ENCODE measurements at regions of chr17 and their contacts with region 1.

Region 1: GRCh38 chr17:60077672-60078519 is 825 bp downstream of the HEATR6 start:
- DNase-seq: no peak
- ATAC-seq: peak; percentile 8 to 25
- H3K4me3 ChIP-seq: peak overlapping the region; percentile 81 to 99 (median 84)
- H3K27ac ChIP-seq: peak overlapping the region; percentile 78 to 90 (median 86)
- H3K4me1 ChIP-seq: peaks cover 12 to 23% of the 10 kb centered on the region in 2 donors
- H3K27me3 ChIP-seq: no peaks in the 10 kb centered on the region
- CTCF ChIP-seq: no peak
- POLR2A ChIP-seq: no peak

Region 2: DNA sequence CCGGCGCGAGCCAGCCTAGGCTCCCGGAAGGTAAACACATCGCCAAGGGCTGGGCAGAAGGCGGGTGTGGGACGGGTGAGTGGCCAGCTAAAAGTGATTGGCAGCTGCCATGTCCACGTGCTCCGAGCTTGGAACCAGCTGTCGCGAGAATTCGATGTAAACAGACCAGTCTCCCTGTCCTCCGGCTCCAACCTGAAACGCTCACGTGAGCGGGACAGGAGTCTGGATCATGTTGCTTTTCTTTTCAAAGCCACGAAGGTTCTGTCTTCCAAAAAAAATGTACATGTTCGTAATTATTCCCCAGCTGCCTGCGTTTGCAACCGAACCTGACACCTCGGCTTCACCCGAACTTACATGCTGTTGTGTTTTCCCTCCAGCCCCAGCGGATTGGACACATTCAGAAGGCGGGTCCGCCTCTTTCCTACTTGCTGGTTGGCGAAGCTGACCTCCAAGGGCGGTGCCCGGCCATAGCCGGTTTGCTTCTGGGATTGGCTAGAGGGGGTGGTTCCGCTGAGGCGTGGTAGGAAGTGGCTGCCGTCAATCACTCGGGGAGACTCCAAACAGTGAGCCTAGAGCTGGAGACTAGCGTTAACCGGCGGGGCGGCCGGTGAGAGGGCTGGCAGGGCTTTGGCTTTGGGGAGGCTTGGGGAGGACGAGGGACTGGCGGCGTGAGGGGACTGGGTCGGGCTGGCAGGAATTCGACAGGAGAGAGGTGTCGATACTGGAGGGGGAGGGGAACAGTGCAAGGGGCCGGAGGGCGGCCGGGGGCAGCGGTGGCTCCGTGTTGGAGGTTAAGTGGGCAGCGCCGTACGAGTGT is 599.6 kb after region 1 on chr17 and contains the start of gene BCAS3:
- in situ Hi-C with region 1: no loop called
- intact Hi-C with region 1: loop called (anchors 1 kb)
- DNase-seq: peak; percentile 99
- ATAC-seq: peak; percentile 96 to 98
- H3K4me3 ChIP-seq: peak within 1 kb of the TSS; percentile 58 to 91 (median 87)
- H3K27ac ChIP-seq: peak within 1 kb of the TSS; percentile 85 to 92 (median 90)
- H3K4me1 ChIP-seq: peaks cover 6 to 8% of the 10 kb centered on the region in 2 donors
- H3K27me3 ChIP-seq: no peaks in the 10 kb centered on the region
- CTCF ChIP-seq: no peak
- POLR2A ChIP-seq: peak; percentile 83 to 95
- total RNA-seq, gene BCAS3: 18.2 to 60.6 (median 23.4) TPM